RWPE1 (cell line): ENCODE measurements at regions of chr19 and their contacts with region 1.

Region 1: GRCh38 chr19:36409841-36410240 is 8.6 kb downstream of the ZFP82 start:
- DNase-seq: no peak
- H3K27ac ChIP-seq: no peak overlapping the region
- CTCF ChIP-seq: no peak

Region 2: DNA sequence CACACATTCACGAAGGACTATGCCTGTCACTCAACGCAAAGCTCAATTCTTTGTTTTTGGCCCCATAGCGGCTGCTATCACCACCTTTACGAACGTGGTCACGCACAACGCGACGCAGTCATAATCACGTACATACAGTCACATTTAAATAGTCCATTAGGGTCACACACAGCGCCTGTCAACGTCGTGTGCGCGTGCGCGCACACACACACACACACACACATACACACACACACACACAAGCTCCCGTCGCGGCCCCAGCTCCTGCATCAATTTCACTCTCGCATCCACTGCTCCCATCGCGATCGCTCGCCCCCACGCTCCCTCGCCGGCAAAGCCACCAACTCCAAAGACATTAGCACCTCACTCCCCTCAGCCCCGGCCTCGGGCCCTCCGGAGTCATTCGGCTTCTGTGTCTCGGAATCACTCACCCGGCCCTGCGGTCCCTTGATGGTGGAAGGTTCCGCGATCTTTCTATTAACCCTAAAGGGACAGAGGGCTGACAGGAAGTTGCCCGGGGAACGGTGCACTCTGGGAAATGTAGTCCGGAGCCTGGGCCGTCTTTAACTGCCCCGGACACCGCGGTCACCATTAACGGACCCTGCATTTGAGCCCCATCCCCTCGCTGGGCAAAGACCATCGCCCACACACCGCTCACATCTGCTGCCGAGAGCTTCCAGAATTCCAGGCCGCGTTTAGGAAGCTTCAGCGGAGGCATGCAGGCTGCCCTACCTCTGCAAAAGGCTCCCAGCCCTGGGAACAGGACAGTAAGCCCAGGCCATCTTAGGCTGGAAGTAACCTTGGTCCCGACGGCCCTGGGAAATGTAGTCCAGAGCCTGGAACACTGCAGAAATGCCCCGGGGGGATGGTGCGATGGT is 428.3 kb after region 1 on chr19 and contains the start of gene ZNF790:
- CTCF ChIA-PET with region 1: no interaction called
- POLR2A ChIA-PET with region 1: interaction called, 11 read pairs
- DNase-seq: peak; percentile 79
- H3K27ac ChIP-seq: peak within 1 kb of the TSS; percentile 85
- CTCF ChIP-seq: no peak